GM12878 (cell line): ENCODE measurements at regions of chr20 and their contacts with region 1.

Region 1: DNA sequence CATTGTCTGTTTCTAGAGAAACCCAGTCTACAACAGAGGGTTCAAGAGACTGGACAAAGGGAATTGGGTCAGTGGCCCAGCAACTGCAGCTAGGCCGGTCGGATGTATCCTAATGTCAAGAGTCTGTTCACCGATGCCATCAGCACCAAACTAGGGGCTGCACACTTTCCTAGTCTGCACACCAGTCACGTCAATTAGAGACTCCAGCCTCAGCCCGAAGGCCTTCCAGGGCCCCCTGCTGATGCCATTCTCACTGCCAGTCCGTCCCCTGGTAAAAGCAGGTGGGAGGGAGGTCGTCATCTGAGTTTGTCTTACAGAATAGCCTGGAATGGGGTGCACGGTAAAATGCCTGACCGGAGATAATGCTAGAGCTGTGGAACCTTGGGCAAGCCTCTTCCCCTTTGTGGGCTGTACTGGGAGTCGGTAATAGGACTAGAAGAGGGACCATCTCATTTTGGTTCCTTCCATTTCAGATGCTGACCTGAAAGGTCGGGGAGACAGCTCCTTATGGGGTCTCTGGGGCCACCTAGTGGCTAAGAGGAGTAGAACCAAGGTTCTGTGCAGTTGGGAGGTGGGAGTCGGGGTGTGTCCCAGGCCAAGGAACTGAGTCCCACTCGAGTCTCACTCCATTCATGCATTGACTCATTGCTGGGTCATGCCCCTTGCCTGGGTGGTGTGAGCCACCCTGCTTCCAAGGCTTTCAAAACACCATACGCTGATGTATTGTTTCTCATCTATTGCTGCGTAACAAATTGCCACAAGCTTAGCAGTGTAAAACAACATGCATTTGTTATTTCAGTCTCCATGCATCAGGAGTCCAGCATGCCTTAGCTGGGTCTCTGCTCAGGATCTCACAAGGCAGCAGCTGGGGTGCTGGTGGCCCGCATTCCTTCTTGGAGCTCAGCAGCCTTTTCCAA is 5.1 kb downstream of the SOX12 start:
- DNase-seq: no peak
- ATAC-seq: peak; percentile 65
- H3K4me3 ChIP-seq: no peak overlapping the region
- H3K27ac ChIP-seq: no peak overlapping the region
- H3K4me1 ChIP-seq: peaks cover 15% of the 10 kb centered on the region
- H3K27me3 ChIP-seq: no peaks in the 10 kb centered on the region
- CTCF ChIP-seq: peak; percentile 84 to 94 (median 93); a peak in 5 of 6 replicates
- EP300 ChIP-seq: no peak
- POLR2A ChIP-seq: no peak
- RAD21 ChIP-seq: peak; percentile 93

Region 2: GRCh38 chr20:215796-216195 is 114.7 kb before region 1 on chr20:
- CTCF ChIA-PET with region 1: interaction called, 12 read pairs
- POLR2A ChIA-PET with region 1: no interaction called
- RAD21 ChIA-PET with region 1: interaction called, 5 read pairs
- SMC1A ChIA-PET with region 1: interaction called, 16 read pairs
- in situ Hi-C with region 1: loop called (anchors 5 kb)
- intact Hi-C with region 1: no loop called
- DNase-seq: no peak
- ATAC-seq: no peak
- H3K4me3 ChIP-seq: no peak overlapping the region
- H3K27ac ChIP-seq: no peak overlapping the region
- H3K4me1 ChIP-seq: no peaks in the 10 kb centered on the region
- H3K27me3 ChIP-seq: no peaks in the 10 kb centered on the region
- CTCF ChIP-seq: no peak
- EP300 ChIP-seq: no peak
- POLR2A ChIP-seq: no peak
- RAD21 ChIP-seq: no peak

Region 3: GRCh38 chr20:266596-267562 is 63.6 kb before region 1 on chr20:
- CTCF ChIA-PET with region 1: interaction called, 59 read pairs
- POLR2A ChIA-PET with region 1: no interaction called
- RAD21 ChIA-PET with region 1: interaction called, 19 read pairs
- SMC1A ChIA-PET with region 1: interaction called, 28 read pairs
- in situ Hi-C with region 1: no loop called
- intact Hi-C with region 1: loop called (anchors 5 kb)
- DNase-seq: peak; percentile 41
- ATAC-seq: peak; percentile 97
- H3K4me3 ChIP-seq: peak overlapping the region; percentile 65; the same call in 1 of the 2 replicates
- H3K27ac ChIP-seq: no peak overlapping the region
- H3K4me1 ChIP-seq: no peaks in the 10 kb centered on the region
- H3K27me3 ChIP-seq: no peaks in the 10 kb centered on the region
- CTCF ChIP-seq: peak; percentile 91 to 94 (median 94)
- EP300 ChIP-seq: no peak
- POLR2A ChIP-seq: peak; percentile 75
- RAD21 ChIP-seq: peak; percentile 82

Region 4: DNA sequence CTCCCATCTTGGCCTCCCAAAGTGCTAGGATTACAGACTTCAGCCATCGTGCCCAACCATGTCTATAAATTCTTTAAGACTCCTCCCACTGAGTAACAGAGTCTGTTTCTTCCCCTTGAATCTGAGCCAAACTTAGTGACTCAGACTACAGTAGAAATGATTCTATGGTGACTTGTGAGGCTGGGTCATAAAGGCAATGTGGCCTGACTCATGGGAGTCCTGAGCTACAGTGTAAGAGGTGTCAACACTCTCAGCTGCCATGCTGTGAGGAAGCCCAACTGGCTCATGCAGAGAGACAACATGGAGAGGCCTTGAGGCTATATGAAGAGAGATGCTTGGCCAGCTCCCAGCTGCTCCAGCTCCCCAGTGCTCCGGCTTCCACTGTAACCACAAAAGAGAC is 11.2 kb after region 1 on chr20:
- CTCF ChIA-PET with region 1: interaction called, 27 read pairs
- POLR2A ChIA-PET with region 1: interaction called, 9 read pairs
- RAD21 ChIA-PET with region 1: interaction called, 5 read pairs
- SMC1A ChIA-PET with region 1: interaction called, 6 read pairs
- in situ Hi-C with region 1: no loop called
- intact Hi-C with region 1: no loop called
- DNase-seq: no peak
- ATAC-seq: no peak
- H3K4me3 ChIP-seq: no peak overlapping the region
- H3K27ac ChIP-seq: no peak overlapping the region
- H3K4me1 ChIP-seq: peaks cover 6% of the 10 kb centered on the region; the same call in 1 of the 2 replicates
- H3K27me3 ChIP-seq: no peaks in the 10 kb centered on the region
- CTCF ChIP-seq: no peak
- EP300 ChIP-seq: no peak
- POLR2A ChIP-seq: no peak
- RAD21 ChIP-seq: no peak